ENCODE measurements at regions of chr3 and their contacts with region 1.

Region 1: DNA sequence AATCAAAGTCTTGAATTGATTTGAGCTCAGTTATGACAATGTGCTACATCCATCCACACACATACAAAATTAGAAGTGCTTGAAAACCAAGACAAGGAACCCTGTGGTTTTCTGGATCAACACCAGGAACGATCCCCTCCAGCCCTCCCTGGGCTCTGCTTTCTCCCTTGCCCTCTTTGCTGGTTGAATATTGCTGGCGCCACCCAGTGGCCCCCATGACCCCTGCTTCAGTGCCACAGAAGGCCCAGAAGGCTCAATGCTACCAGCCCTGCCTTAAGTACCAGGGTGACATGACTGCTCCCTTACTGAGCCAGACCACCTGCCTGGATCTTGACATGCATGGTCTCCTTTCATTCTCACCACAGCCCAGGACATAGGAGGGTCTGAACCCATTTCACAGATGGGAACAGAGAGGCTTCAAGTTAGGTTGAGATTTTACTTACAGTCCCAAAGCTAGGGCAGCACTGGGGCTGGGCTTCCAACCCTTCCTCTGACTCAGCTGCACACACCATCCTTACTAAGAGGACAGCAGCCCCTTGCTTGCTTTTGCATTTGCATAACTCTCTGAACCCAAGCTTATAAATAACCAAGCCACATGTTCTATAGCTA is 15.0 kb downstream of the IL12A start:
- DNase-seq: peak; percentile 48
- ATAC-seq: peak; percentile 93
- H3K4me3 ChIP-seq: no peak overlapping the region
- H3K27ac ChIP-seq: no peak overlapping the region
- H3K4me1 ChIP-seq: peaks cover 0 to 3% of the 10 kb centered on the region in 2 experiments; a peak in 2 of 4 replicates
- H3K27me3 ChIP-seq: no peaks in the 10 kb centered on the region
- CTCF ChIP-seq: peak; percentile 68 to 76 (median 73); a peak in 5 of 6 replicates
- POLR2A ChIP-seq: no peak
- RAD21 ChIP-seq: peak; percentile 78

Region 2: DNA sequence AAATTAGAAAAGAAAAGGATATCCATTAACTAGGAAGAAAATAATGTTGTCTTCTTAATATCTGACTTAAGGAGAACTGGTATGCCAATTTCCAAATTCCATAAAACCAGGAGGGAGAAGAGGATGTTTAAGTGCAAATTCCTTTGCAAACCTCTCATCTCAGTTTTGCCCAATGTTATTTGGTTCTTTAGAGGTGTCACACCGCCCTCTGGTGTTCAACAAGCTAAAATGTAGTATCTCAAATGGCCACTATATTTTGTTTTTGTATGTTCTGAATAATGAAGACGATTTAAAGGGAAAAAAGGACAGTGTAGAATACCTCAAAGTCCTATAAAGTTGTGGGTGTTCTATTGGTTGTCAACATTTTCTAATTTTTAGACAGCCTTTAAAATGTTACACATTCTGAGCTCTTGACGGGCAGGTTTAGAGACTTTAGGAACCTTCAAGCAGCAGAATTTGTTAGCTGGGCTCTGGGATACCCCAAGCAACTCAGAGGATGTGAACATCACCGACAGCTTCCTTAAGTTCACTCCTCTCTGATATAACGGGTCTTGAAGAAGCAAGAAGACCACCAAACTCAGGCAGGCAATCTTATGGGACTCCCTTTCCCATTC is 743.5 kb before region 1 on chr3:
- CTCF ChIA-PET with region 1: interaction called, 21 read pairs
- POLR2A ChIA-PET with region 1: no interaction called
- RAD21 ChIA-PET with region 1: no interaction called
- intact Hi-C with region 1: loop called (anchors 1 kb)
- DNase-seq: peak; percentile 45
- ATAC-seq: peak; percentile 74
- H3K4me3 ChIP-seq: no peak overlapping the region
- H3K27ac ChIP-seq: no peak overlapping the region
- H3K4me1 ChIP-seq: no peaks in the 10 kb centered on the region
- H3K27me3 ChIP-seq: 0 out of 2 replicates have a peak, but pooled peaks cover 6% of the 10 kb centered on the region
- CTCF ChIP-seq: peak; percentile 59 to 89 (median 83)
- POLR2A ChIP-seq: no peak
- RAD21 ChIP-seq: peak; percentile 89

Region 3: DNA sequence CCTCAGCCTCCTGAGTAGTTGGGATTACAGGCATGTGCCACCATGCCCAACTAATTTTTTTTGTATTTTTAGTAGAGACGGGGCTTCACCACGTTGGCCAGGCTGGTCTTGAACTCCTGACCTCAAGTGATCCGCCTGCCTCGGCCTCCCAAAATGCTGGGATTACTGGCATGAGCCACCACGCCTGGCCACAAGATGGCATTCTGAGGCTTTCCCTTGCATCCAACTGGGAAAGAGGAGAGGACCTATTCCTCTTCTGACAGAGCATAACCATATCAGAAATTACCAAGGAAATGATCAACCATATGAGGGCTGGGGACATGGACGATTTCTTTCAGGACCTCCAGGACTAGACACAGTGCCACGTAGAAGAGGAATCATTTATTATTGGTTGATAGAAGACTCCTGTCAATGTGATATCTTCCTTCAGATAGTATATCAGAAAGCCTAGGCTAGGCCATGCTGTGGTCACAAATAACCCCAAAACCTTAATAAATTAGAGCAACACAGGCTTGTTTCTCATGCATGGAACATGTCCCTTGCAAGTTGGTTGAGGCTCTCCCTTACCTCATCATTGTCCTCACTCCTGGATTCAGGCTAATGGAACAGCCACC is 387.3 kb before region 1 on chr3:
- CTCF ChIA-PET with region 1: interaction called, 3 read pairs
- POLR2A ChIA-PET with region 1: no interaction called
- RAD21 ChIA-PET with region 1: no interaction called
- intact Hi-C with region 1: loop called (anchors 2 kb)
- DNase-seq: no peak
- ATAC-seq: peak; percentile 81
- H3K4me3 ChIP-seq: no peak overlapping the region
- H3K27ac ChIP-seq: no peak overlapping the region
- H3K4me1 ChIP-seq: peaks cover 6 to 13% of the 10 kb centered on the region in 2 experiments; a peak in 3 of 4 replicates
- H3K27me3 ChIP-seq: no peaks in the 10 kb centered on the region
- CTCF ChIP-seq: peak; percentile 56 to 72 (median 61); a peak in 5 of 6 replicates
- POLR2A ChIP-seq: no peak
- RAD21 ChIP-seq: peak; percentile 90

Region 4: DNA sequence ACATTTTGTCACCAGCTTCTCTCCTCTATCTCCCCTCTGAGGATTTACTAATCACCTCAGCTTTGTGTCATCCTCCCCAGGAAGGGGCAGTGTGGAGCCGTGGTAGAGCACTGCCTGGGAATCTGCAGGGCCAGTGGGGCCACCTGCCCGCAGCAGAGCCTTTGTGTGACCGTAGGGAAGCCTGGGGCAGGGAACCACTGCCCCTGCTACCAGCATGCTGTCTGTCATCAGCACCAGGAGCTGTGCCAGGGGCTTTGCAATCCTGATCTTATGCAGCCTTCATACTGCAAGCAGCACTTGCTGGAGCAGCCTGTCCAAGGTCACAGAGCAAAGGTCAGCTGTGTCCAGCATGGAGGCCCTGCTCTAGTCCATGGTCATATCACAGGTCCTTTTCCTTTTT is 185.2 kb before region 1 on chr3:
- CTCF ChIA-PET with region 1: interaction called, 12 read pairs
- POLR2A ChIA-PET with region 1: no interaction called
- RAD21 ChIA-PET with region 1: interaction called in 1 of 2 experiments, 3 read pairs
- intact Hi-C with region 1: no loop called
- DNase-seq: no peak
- ATAC-seq: peak; percentile 85
- H3K4me3 ChIP-seq: no peak overlapping the region
- H3K27ac ChIP-seq: no peak overlapping the region
- H3K4me1 ChIP-seq: peaks cover 0 to 3% of the 10 kb centered on the region in 2 experiments; a peak in 2 of 4 replicates
- H3K27me3 ChIP-seq: no peaks in the 10 kb centered on the region
- CTCF ChIP-seq: peak in 2 of 3 experiments; percentile 13 to 23; a peak in 2 of 6 replicates
- POLR2A ChIP-seq: no peak
- RAD21 ChIP-seq: peak; percentile 49

Region 5: GRCh38 chr3:159861369-159861987 is 142.1 kb before region 1 on chr3:
- CTCF ChIA-PET with region 1: no interaction called
- POLR2A ChIA-PET with region 1: no interaction called
- RAD21 ChIA-PET with region 1: no interaction called
- intact Hi-C with region 1: no loop called
- DNase-seq: no peak
- ATAC-seq: no peak
- H3K4me3 ChIP-seq: no peak overlapping the region
- H3K27ac ChIP-seq: no peak overlapping the region
- H3K4me1 ChIP-seq: peaks cover 10 to 17% of the 10 kb centered on the region in 2 experiments
- H3K27me3 ChIP-seq: no peaks in the 10 kb centered on the region
- CTCF ChIP-seq: no peak
- POLR2A ChIP-seq: no peak
- RAD21 ChIP-seq: no peak

Region 6: GRCh38 chr3:159884661-159885402 is 118.8 kb before region 1 on chr3:
- CTCF ChIA-PET with region 1: interaction called, 154 read pairs
- POLR2A ChIA-PET with region 1: interaction called, 4 read pairs
- RAD21 ChIA-PET with region 1: interaction called, 6 to 7 read pairs
- intact Hi-C with region 1: loop called (anchors 1 kb)
- DNase-seq: no peak
- ATAC-seq: peak; percentile 86
- H3K4me3 ChIP-seq: no peak overlapping the region
- H3K27ac ChIP-seq: no peak overlapping the region
- H3K4me1 ChIP-seq: peaks cover 0 to 9% of the 10 kb centered on the region in 2 experiments; a peak in 2 of 4 replicates
- H3K27me3 ChIP-seq: no peaks in the 10 kb centered on the region
- CTCF ChIP-seq: peak; percentile 46 to 62 (median 59); a peak in 5 of 6 replicates
- POLR2A ChIP-seq: no peak
- RAD21 ChIP-seq: peak; percentile 73

Region 7: DNA sequence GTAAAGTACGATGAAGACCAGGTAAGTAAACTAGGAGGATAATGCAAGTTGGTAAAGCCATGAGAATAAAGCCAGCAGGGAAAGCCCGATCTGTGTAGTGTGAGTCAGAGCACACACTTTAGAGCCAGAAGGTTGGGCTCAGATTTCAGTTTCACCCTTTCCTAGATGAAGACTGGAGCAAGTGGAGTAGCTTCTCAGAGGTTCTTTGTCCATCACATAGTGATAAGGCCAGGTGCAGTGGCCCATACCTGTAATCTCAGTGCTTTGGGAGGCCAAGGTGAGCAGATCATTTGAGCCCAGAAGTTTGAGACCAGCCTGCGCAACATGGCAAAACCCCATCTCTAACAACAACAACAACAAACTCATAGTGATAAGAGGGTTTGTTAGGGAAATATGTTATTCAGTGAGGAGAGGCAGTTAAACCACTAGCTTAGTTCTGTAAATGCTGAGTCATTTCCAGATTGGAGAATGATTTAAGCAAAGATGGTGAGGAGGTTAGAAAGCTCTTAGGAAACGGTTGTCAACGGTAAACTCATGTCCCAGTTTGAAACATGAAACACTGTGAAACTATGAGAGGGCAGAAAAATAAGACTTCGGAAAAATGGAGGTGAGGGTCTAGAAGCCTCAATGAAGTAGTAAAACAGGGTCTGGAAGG is 24.0 kb after region 1 on chr3:
- CTCF ChIA-PET with region 1: interaction called, 12 read pairs
- POLR2A ChIA-PET with region 1: interaction called, 3 read pairs
- RAD21 ChIA-PET with region 1: no interaction called
- intact Hi-C with region 1: no loop called
- DNase-seq: no peak
- ATAC-seq: 0 out of 2 replicates have a peak, but pooled peaks have one; percentile 15
- H3K4me3 ChIP-seq: no peak overlapping the region
- H3K27ac ChIP-seq: no peak overlapping the region
- H3K4me1 ChIP-seq: peaks cover 0 to 14% of the 10 kb centered on the region in 2 experiments; a peak in 2 of 4 replicates
- H3K27me3 ChIP-seq: no peaks in the 10 kb centered on the region
- CTCF ChIP-seq: no peak
- POLR2A ChIP-seq: no peak
- RAD21 ChIP-seq: no peak